Right ventricle myocardium inferior (tissue), 1 donor: ENCODE measurements at regions of chr22 and their contacts with region 1.

Region 1: DNA sequence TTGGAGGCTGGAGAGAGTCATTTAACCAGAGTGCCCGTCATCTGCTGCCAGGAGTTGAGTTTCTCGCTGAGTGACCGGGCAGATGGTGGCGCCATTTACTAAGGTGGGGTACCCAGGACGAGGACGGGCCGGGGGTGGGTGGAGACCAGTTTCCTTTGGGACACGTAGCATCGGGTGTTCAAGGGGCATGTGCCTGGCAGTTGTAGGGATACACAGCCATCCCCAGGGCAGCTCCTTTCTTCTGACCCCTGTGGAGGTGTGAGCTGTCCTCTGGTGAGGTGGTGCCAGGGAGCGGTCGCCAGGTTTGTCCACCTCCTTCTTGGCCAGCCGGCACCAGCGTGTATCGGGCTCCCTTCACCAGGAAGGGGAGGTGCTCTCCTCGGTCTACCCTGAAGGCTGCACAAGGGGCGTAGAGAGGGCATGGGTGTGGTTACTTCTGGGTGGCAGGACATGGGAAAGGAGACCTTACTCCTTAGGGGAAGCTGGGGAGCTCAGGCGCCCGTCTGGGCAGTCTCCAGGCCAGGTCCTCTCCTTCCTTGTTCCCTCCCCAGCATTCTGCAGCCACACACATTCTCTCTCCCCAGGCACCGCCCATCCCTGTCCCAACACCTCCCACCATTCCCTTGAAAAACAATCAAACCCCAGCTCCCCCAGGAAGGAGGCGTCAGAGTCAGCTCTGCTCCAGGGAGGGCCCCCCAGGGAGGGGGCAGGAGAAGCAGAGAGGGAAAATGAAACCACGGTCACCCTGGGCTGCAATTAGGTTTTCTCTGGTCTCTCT is 10.3 kb upstream of the MB start:
- DNase-seq: no peak
- ATAC-seq: peak; percentile 67

Region 2: GRCh38 chr22:35154937-35155387 is 472.5 kb before region 1 on chr22:
- intact Hi-C with region 1: no loop called
- DNase-seq: no peak
- ATAC-seq: no peak

Region 3: DNA sequence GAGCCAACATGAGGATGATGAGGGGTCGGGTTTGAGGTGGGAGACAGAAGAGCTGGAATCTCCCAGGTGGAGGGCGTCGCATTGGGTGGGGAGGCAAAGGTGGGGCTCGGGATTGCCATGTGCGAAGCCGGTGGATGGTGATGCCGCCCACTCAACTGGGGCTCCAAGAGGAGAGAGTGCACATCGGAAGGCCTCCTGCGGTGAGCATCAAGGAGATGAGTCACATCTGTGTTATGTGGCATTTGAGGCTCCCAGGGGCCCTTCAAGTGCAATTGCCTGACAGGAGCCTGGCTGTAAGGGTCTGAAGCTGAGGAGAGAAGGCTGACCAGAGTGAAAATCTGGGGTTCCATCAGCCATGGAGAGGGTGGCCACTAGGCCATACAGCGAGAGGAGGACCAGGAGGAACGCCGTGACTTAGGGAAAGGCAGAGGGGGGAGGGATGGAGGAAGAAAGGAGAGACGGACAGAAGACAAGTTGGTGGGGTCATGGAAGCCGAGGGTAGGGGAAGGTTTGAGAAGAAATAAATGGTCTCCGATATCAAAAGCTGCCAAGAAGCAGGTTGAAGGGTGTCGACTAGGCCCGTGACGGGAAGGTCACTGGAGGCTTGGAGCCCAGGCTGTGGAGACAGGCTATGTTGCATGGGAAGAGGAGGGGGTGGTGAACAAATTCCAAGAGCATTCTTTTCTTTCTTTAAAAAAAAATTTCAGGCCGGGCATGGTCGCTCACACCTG is 65.5 kb before region 1 on chr22:
- intact Hi-C with region 1: no loop called
- DNase-seq: no peak
- ATAC-seq: no peak

Region 4: DNA sequence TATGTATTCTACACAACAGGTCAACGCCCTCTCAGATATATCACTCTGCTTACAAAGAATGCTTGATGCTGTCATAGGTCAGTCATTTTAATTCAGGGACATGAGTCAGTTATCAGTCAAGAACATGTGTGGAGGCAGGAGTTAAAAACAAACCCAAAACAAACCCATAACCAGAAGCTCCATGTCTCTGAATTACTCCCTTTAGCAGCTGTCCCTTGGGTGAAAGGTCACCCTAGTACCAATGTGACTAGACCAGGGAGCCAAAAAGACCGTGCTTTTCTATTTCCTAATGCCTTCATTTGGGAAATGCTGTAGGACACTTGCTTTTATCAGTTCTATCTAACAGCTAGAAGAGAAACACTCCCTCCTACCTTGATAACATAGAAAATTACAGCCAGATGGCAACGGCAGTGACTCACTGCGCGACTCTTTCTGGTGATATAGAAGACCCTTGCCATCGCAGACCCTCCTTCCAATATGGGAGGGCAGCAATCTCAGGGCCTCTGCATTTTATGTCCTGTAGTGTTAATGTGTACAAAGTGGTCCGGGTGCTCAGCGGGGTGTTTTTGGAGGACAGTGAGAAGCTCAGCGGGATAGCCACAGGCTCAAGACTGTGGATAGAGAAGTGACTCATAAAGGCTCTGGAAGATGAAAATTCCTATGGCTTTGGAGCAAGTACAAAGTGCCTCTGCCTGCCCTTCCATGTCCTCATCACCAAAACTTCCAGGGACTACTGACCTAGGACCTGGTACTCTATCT is 115.1 kb after region 1 on chr22:
- intact Hi-C with region 1: loop called (anchors 5 kb)
- DNase-seq: no peak
- ATAC-seq: peak; percentile 60

Region 5: GRCh38 chr22:35921777-35922176 is 294.3 kb after region 1 on chr22:
- intact Hi-C with region 1: loop called (anchors 2 kb)
- DNase-seq: no peak
- ATAC-seq: peak; percentile 92

Region 6: GRCh38 chr22:36010882-36011281 is 383.4 kb after region 1 on chr22:
- intact Hi-C with region 1: no loop called
- DNase-seq: no peak
- ATAC-seq: peak; percentile 55

Region 7: GRCh38 chr22:36065775-36066559 is 438.5 kb after region 1 on chr22:
- intact Hi-C with region 1: loop called (anchors 5 kb)
- DNase-seq: peak; percentile 91
- ATAC-seq: peak; percentile 92